ENCODE measurements at regions of chr19 and their contacts with region 1.

Region 1: DNA sequence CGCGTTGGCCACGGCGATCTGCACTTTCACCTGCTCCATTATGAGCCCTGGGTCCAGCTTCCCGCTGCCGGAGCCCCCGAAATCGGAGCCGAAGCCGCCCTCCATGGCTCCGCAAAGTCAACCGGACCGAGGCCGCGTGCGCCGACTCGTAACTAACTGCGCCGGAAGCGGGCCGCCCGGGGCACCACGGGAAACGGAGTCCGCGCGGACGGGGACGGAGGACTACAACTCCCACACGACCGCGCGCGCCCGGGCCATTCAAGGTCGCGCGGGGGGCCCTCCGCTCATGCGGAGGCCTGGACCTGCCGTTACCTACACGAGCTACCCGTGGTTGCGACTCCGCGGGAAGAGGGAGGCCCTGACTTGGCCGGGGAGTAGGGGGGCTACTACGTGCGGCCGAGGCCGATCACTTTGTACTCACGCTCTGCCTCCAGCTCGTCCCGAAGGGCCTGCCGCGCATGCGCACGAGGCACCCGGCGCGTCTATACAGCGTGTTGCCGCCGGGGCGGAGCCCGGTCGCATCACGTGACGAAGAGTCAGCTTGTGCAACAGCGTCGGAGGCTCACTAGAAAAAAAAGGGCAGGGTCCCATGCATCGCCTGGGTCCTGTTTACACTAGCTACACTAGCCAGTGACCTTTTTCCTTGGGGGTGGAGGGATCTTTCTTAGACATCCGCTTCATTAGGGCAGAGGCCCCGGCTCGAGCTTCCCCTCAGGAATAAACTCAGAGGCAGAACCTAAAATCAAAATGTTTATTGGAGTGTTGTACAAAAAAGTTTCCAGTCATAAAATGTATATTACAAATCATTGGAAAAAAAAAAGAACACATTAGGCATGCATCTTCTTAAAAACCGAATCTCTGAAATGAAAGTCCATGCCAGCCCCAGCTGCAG is at the start of gene TIMM13:
- DNase-seq: peak; percentile 98
- total RNA-seq, gene TIMM13: 57.3 TPM

Region 2: DNA sequence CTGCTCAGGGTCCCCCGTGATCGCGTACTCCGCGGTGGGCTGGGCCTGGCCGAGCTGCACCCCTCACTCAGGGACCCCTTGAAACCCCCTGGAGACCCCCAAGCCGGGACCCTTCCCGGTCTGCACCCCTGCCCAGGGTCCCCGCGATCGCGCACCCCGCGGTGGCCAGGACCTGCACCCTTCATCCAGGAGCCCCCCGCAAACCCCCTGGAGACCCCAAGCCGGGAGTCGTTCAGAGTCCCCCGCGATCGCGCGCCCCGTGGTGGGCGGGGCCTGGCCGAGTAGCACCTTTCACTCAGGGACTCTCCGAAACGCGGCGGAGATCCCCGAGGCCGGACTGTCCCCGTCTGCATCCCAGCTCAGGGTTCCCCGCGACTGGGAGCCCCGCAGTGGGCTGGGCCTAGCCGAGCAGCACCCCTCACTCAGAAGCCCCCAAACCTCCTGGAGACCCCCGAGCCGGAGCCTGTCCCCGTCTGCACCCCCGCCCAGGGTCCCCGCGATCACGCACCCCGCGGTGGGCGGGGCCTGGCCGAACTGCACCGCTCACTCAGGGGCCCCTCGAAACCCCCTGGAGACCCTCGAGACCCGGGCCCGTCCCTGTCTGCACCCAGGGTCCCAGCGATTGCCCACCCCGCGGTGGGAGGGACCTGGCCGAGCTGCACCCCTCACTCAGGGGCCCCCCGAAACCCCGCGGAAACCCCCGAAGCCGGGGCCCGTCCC is 28.3 kb after region 1 on chr19:
- intact Hi-C with region 1: loop called (anchors 2 kb)
- DNase-seq: no peak

Region 3: GRCh38 chr19:2461751-2462634 is 34.3 kb after region 1 on chr19:
- intact Hi-C with region 1: loop called (anchors 2 kb)
- DNase-seq: no peak

Measured in cardiac septum (tissue), 1 donor.